HEK293 (cell line): ENCODE measurements at regions of chr13 and their contacts with region 1.

Region 1: GRCh38 chr13:95624020-95624419 is 20.5 kb downstream of the DZIP1 start:
- H3K4me3 ChIP-seq: no peak overlapping the region
- H3K27ac ChIP-seq: no peak overlapping the region
- H3K4me1 ChIP-seq: no peaks in the 10 kb centered on the region
- CTCF ChIP-seq: no peak

Region 2: GRCh38 chr13:95660981-95661581 is 37.1 kb after region 1 on chr13:
- CTCF ChIA-PET with region 1: interaction called, 30 read pairs
- POLR2A ChIA-PET with region 1: no interaction called
- H3K4me3 ChIP-seq: no peak overlapping the region
- H3K27ac ChIP-seq: no peak overlapping the region
- H3K4me1 ChIP-seq: no peaks in the 10 kb centered on the region
- CTCF ChIP-seq: no peak

Region 3: DNA sequence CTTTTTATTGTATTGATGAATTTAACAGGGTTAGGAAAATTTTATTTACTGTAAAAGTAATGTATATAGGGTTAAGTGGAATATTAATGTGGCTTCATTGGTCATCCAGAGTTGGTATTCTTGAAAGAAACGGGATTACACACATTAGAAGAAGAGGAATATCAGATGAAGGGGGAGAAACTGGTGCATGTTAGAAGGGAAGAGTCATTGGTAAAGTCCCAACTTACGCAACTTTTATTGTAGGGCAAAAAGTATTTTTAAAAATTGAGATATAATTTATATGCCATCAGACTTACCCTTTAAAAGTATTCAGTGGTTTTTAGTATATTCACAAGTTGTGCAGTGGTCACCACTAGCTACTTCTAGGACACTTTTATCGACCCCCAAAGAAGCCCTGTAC is 100.2 kb after region 1 on chr13:
- CTCF ChIA-PET with region 1: no interaction called
- POLR2A ChIA-PET with region 1: no interaction called
- H3K4me3 ChIP-seq: no peak overlapping the region
- H3K27ac ChIP-seq: no peak overlapping the region
- H3K4me1 ChIP-seq: no peaks in the 10 kb centered on the region
- CTCF ChIP-seq: no peak